ENCODE measurements at regions of chr11 and their contacts with region 1.

Region 1: GRCh38 chr11:120335908-120336640 is at the start of gene ARHGEF12:
- DNase-seq: peak; percentile 16 to 86 (median 47)
- ATAC-seq: peak; percentile 72
- H3K4me3 ChIP-seq: peak within 1 kb of the TSS; percentile 65
- H3K4me3 Mint-ChIP-seq: peak within 1 kb of the TSS; percentile 75 to 95 (median 87)
- H3K27ac ChIP-seq: no peak within 1 kb of the TSS
- H3K27ac Mint-ChIP-seq: peak within 1 kb of the TSS in 6 of 9 donors; percentile 8 to 82 (median 65)
- H3K4me1 ChIP-seq: peaks cover 13 to 22% of the 10 kb centered on the region in 2 donors
- H3K4me1 Mint-ChIP-seq: peaks cover 20 to 36% (median 31%) of the 10 kb centered on the region in 7 donors
- H3K27me3 ChIP-seq: peaks cover 0 to 26% of the 10 kb centered on the region in 2 donors
- H3K27me3 Mint-ChIP-seq: peaks cover 58 to 68% (median 63%) of the 10 kb centered on the region in 5 donors
- total RNA-seq, gene ARHGEF12: 1.9 to 13.1 (median 3.5) TPM

Region 2: DNA sequence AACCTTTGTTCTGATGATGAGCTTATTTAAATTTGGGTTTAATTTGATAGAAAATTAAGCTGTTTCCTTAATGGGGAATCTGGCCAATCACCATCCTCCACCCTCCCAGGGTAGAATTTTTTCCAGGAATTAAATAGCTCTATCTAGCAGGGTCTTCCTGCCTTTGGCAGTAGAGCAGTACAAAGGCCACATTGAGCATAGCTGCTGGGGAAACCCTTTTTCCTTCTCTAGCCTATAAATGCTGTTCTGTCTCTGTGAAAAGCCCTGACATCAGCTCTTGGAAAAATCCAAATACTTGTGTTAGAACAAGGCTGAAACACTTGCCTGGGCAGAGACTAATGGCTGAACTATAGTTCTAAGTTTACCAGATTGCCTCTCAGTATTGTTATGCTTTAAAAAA is 55.2 kb after region 1 on chr11:
- CTCF ChIA-PET with region 1: no interaction called
- POLR2A ChIA-PET with region 1: no interaction called
- intact Hi-C with region 1: no loop called
- DNase-seq: no peak
- ATAC-seq: no peak
- H3K4me3 ChIP-seq: no peak overlapping the region
- H3K4me3 Mint-ChIP-seq: no peak overlapping the region
- H3K27ac ChIP-seq: no peak overlapping the region
- H3K27ac Mint-ChIP-seq: no peak overlapping the region
- H3K4me1 ChIP-seq: no peaks in the 10 kb centered on the region
- H3K4me1 Mint-ChIP-seq: peaks cover 0 to 5% (median 0%) of the 10 kb centered on the region in 7 donors
- H3K27me3 ChIP-seq: no peaks in the 10 kb centered on the region
- H3K27me3 Mint-ChIP-seq: peaks cover 29 to 63% (median 43%) of the 10 kb centered on the region in 5 donors

Region 3: DNA sequence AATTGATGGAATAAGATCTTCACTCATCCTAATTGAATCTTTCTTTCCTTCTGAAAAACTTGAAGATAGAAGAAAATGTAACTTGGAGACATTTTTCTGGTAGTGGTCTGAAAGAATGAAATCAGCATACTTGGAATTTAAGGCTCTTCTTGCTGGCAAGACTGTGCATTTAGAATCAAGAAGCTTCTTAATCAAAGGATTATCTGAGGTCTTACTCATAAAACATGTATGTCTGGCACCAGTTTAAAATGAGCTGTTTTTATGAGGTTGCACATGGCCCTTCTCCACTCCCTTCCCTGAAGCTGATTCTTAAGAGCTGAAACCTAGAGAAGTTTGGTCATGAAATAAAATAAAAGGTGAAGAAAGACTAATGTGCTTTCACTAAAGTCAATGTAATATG is 77.4 kb after region 1 on chr11:
- CTCF ChIA-PET with region 1: interaction called, 3 read pairs
- POLR2A ChIA-PET with region 1: no interaction called
- intact Hi-C with region 1: loop called in 1 of 2 experiments (anchors 5 kb)
- DNase-seq: no peak
- ATAC-seq: no peak
- H3K4me3 ChIP-seq: no peak overlapping the region
- H3K4me3 Mint-ChIP-seq: no peak overlapping the region
- H3K27ac ChIP-seq: no peak overlapping the region
- H3K27ac Mint-ChIP-seq: no peak overlapping the region
- H3K4me1 ChIP-seq: no peaks in the 10 kb centered on the region
- H3K4me1 Mint-ChIP-seq: no peaks in the 10 kb centered on the region
- H3K27me3 ChIP-seq: no peaks in the 10 kb centered on the region
- H3K27me3 Mint-ChIP-seq: peaks cover 0 to 12% (median 0%) of the 10 kb centered on the region in 5 donors

Region 4: GRCh38 chr11:120455487-120455886 is 119.4 kb after region 1 on chr11:
- CTCF ChIA-PET with region 1: no interaction called
- POLR2A ChIA-PET with region 1: no interaction called
- intact Hi-C with region 1: no loop called
- DNase-seq: no peak
- ATAC-seq: no peak
- H3K4me3 ChIP-seq: no peak overlapping the region
- H3K4me3 Mint-ChIP-seq: no peak overlapping the region
- H3K27ac ChIP-seq: no peak overlapping the region
- H3K27ac Mint-ChIP-seq: no peak overlapping the region
- H3K4me1 ChIP-seq: no peaks in the 10 kb centered on the region
- H3K4me1 Mint-ChIP-seq: peaks cover 0 to 3% (median 0%) of the 10 kb centered on the region in 7 donors
- H3K27me3 ChIP-seq: no peaks in the 10 kb centered on the region
- H3K27me3 Mint-ChIP-seq: no peaks in the 10 kb centered on the region

Region 5: GRCh38 chr11:120511116-120511819 is 175.2 kb after region 1 on chr11 and contains the start of gene GRIK4:
- CTCF ChIA-PET with region 1: no interaction called
- POLR2A ChIA-PET with region 1: no interaction called
- intact Hi-C with region 1: loop called (anchors 1 to 5 kb)
- DNase-seq: peak; percentile 36 to 84 (median 59)
- ATAC-seq: peak; percentile 88
- H3K4me3 ChIP-seq: no peak within 1 kb of the TSS
- H3K4me3 Mint-ChIP-seq: peak within 1 kb of the TSS in 9 of 10 donors; percentile 39 to 68 (median 64)
- H3K27ac ChIP-seq: no peak within 1 kb of the TSS
- H3K27ac Mint-ChIP-seq: no peak within 1 kb of the TSS
- H3K4me1 ChIP-seq: no peaks in the 10 kb centered on the region
- H3K4me1 Mint-ChIP-seq: peaks cover 0 to 9% (median 3%) of the 10 kb centered on the region in 7 donors
- H3K27me3 ChIP-seq: peaks cover 0 to 7% of the 10 kb centered on the region in 2 donors
- H3K27me3 Mint-ChIP-seq: peaks cover 69 to 85% (median 80%) of the 10 kb centered on the region in 5 donors
- total RNA-seq, gene GRIK4: 0.93 to 3.8 TPM in 2 of 5 experiments, not detected in the others

Region 6: GRCh38 chr11:120801801-120802689 is 466.0 kb after region 1 on chr11:
- CTCF ChIA-PET with region 1: no interaction called
- POLR2A ChIA-PET with region 1: no interaction called
- intact Hi-C with region 1: loop called in 1 of 2 experiments (anchors 1 kb)
- DNase-seq: peak in 7 of 9 donors; percentile 6 to 40 (median 19)
- ATAC-seq: peak; percentile 44
- H3K4me3 ChIP-seq: no peak overlapping the region
- H3K4me3 Mint-ChIP-seq: no peak overlapping the region
- H3K27ac ChIP-seq: no peak overlapping the region
- H3K27ac Mint-ChIP-seq: no peak overlapping the region
- H3K4me1 ChIP-seq: no peaks in the 10 kb centered on the region
- H3K4me1 Mint-ChIP-seq: peaks cover 0 to 8% (median 0%) of the 10 kb centered on the region in 7 donors
- H3K27me3 ChIP-seq: no peaks in the 10 kb centered on the region
- H3K27me3 Mint-ChIP-seq: peaks cover 6 to 27% (median 17%) of the 10 kb centered on the region in 5 donors